ENCODE measurements at regions of chr1 and their contacts with region 1.

Region 1: DNA sequence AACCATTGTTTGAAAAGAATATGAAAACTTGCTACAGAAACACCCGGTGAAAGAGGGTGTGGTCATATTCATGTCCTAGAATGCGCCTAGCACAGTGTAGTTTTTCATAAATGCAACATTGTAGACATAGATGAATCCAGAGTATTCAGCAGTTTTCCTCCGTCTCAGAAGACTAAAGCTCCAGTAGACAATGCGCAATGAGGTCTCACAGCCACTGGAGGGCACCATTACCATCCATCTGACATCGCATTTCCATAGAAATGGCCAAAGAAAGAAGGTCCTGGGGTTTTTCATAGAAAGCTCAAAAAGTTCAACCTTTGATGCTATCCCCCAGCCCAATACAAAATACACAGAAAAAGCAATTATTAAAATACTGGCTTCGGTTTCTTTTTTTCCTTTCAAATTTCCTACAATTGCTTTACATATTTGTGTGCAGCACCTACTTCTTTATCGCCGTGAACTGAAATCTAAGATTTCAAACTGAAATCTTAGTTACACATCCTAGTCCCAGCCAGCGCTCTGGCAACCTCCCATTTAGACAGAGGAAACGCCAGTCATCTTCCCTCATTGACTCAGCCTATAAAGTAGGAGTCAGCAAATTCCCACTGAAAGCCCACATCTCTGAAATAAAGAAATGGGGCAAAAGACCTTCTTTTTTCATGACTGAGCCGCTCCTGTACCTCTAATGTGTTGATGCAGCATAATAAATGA is 3.9 kb upstream of the CD58 start:
- DNase-seq: peak; percentile 81
- H3K4me3 ChIP-seq: peak overlapping the region in 1 of 2 experiments; percentile 39; a peak in 1 of 4 replicates
- H3K27ac ChIP-seq: peak overlapping the region in 1 of 2 experiments; percentile 43; a peak in 1 of 4 replicates
- H3K4me1 ChIP-seq: peaks cover 3 to 23% of the 10 kb centered on the region in 2 experiments; a peak in 2 of 4 replicates
- H3K27me3 ChIP-seq: no peaks in the 10 kb centered on the region
- CTCF ChIP-seq: peak; percentile 93
- EP300 ChIP-seq: no peak
- RAD21 ChIP-seq: peak; percentile 96

Region 2: GRCh38 chr1:116472431-116472961 is 102.2 kb before region 1 on chr1:
- CTCF ChIA-PET with region 1: no interaction called
- POLR2A ChIA-PET with region 1: no interaction called
- DNase-seq: peak; percentile 57
- H3K4me3 ChIP-seq: no peak overlapping the region
- H3K27ac ChIP-seq: peak overlapping the region in 1 of 2 experiments; percentile 90; a peak in 2 of 4 replicates
- H3K4me1 ChIP-seq: peaks cover 6 to 27% of the 10 kb centered on the region in 2 experiments; a peak in 3 of 4 replicates
- H3K27me3 ChIP-seq: no peaks in the 10 kb centered on the region
- CTCF ChIP-seq: no peak
- EP300 ChIP-seq: peak in 1 of 2 experiments; percentile 29; a peak in 1 of 4 replicates
- RAD21 ChIP-seq: no peak

Region 3: GRCh38 chr1:116544588-116545358 is 30.0 kb before region 1 on chr1:
- CTCF ChIA-PET with region 1: no interaction called
- POLR2A ChIA-PET with region 1: no interaction called
- DNase-seq: no peak
- H3K4me3 ChIP-seq: no peak overlapping the region
- H3K27ac ChIP-seq: no peak overlapping the region
- H3K4me1 ChIP-seq: no peaks in the 10 kb centered on the region
- H3K27me3 ChIP-seq: no peaks in the 10 kb centered on the region
- CTCF ChIP-seq: no peak
- EP300 ChIP-seq: no peak
- RAD21 ChIP-seq: no peak

Region 4: GRCh38 chr1:116586741-116587143 is 12.0 kb after region 1 on chr1:
- CTCF ChIA-PET with region 1: interaction called, 18 read pairs
- POLR2A ChIA-PET with region 1: no interaction called
- DNase-seq: peak; percentile 57
- H3K4me3 ChIP-seq: no peak overlapping the region
- H3K27ac ChIP-seq: peak overlapping the region in 1 of 2 experiments; percentile 67; a peak in 2 of 4 replicates
- H3K4me1 ChIP-seq: peaks cover 0 to 16% of the 10 kb centered on the region in 2 experiments; a peak in 2 of 4 replicates
- H3K27me3 ChIP-seq: no peaks in the 10 kb centered on the region
- CTCF ChIP-seq: no peak
- EP300 ChIP-seq: no peak; a peak in 1 of 4 replicates
- RAD21 ChIP-seq: no peak; the same call in 1 of the 2 replicates

Region 5: DNA sequence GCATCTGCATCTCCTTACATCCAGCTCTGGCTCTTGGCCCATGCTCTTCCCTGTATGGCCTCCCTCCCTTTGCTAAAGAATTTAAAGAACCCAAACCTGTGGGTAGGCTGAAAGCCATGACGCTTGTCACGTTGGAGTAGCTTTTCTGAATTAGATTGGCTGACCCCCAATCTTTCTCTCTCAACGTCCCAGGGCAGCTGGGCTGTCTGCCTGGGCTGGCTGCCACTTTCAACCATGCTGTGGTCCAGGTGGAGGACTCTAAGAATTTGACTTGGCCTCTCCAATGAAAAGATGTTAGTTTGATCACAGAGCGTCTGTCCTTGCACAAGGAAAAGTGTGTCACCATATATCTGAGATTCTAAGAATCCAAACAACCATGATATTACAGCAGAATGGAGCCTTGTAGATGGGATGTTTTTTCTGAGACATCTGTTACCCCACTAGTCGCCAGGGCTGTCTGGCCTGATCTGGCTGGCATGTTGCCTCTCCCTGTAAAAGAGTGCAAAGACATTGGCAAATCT is 99.3 kb after region 1 on chr1:
- CTCF ChIA-PET with region 1: interaction called, 12 read pairs
- POLR2A ChIA-PET with region 1: no interaction called
- DNase-seq: no peak
- H3K4me3 ChIP-seq: no peak overlapping the region
- H3K27ac ChIP-seq: peak overlapping the region in 1 of 2 experiments; percentile 26; a peak in 1 of 4 replicates
- H3K4me1 ChIP-seq: peaks cover 0 to 7% of the 10 kb centered on the region in 2 experiments; a peak in 1 of 4 replicates
- H3K27me3 ChIP-seq: no peaks in the 10 kb centered on the region
- CTCF ChIP-seq: no peak
- EP300 ChIP-seq: no peak
- RAD21 ChIP-seq: no peak

Region 6: DNA sequence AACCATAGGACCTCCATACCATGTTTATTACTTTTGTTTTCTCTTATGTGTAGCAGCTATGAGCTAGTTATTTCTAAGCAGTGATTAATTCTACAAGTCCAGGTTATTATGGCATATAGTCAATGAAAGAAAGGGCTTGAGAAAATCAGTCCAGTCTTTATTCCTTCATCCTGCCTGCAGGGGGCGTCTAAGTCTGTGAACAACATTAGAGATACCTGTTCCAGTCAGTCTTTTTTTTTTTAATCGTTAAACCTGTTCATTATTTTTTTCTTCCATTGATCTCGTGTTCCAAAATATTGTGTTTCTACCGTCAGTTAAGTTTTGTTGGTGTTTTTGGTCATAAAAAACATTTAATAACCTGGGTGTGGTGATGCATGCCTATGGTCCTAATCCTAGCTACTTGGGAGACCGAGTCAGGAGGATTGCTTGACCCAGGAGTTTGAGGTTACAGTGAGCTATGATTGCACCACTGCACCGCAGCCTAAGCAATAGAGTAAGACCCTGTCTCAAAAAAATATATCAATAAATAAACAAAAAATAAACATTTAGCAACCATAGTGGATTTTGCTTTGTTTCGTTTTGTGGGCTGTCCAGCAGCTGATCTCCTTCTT is 150.1 kb after region 1 on chr1:
- CTCF ChIA-PET with region 1: interaction called, 10 read pairs
- POLR2A ChIA-PET with region 1: no interaction called
- DNase-seq: peak; percentile 42
- H3K4me3 ChIP-seq: no peak overlapping the region; a peak in 1 of 4 replicates
- H3K27ac ChIP-seq: no peak overlapping the region
- H3K4me1 ChIP-seq: peaks cover 0 to 6% of the 10 kb centered on the region in 2 experiments; a peak in 2 of 4 replicates
- H3K27me3 ChIP-seq: no peaks in the 10 kb centered on the region; the same call in 1 of the 2 replicates
- CTCF ChIP-seq: peak; percentile 90
- EP300 ChIP-seq: no peak
- RAD21 ChIP-seq: peak; percentile 64

Region 7: DNA sequence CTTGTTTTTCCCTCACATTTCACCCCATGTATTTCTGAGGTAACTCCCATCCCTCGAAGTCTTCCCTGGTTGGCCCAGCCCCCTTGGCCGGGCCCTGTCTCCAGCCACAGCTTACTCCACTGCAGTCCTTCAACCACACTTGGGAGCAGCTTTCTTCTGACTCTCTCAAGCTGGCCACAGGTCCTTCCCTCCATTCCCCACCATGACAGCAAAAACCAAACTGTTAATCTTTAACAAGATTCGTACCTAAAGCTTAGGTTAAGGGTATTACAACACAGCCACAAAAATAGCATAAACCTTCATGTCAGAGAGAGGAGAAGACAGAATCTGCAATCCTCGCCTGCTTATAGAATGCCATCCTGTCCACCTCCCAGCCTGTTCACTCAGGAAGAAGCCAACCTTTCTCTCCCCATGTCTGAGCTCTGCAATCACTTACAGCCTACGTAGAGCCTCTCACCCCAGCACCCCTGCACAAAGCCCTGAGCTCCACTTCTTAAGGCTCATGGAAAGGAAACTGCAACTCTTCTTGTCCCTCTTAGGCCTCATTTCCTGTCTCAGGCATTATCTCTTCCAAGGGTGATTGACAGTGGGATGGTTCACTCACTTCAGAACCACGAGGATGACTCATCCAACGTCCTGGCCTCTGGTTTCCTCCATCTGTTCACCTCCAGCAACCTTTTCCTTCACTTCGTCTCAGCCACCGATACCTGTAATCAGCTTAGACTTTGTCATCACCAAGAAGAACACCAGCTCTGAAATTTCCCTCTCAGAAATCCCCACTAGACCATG is 252.3 kb after region 1 on chr1:
- CTCF ChIA-PET with region 1: interaction called, 11 read pairs
- POLR2A ChIA-PET with region 1: no interaction called
- DNase-seq: no peak
- H3K4me3 ChIP-seq: no peak overlapping the region
- H3K27ac ChIP-seq: no peak overlapping the region
- H3K4me1 ChIP-seq: peaks cover 0 to 20% of the 10 kb centered on the region in 2 experiments; a peak in 2 of 4 replicates
- H3K27me3 ChIP-seq: no peaks in the 10 kb centered on the region
- CTCF ChIP-seq: no peak
- EP300 ChIP-seq: no peak
- RAD21 ChIP-seq: no peak

Region 8: GRCh38 chr1:117051224-117052064 is 476.7 kb after region 1 on chr1:
- CTCF ChIA-PET with region 1: interaction called, 28 read pairs
- POLR2A ChIA-PET with region 1: no interaction called
- DNase-seq: no peak
- H3K4me3 ChIP-seq: no peak overlapping the region
- H3K27ac ChIP-seq: no peak overlapping the region
- H3K4me1 ChIP-seq: no peaks in the 10 kb centered on the region
- H3K27me3 ChIP-seq: no peaks in the 10 kb centered on the region
- CTCF ChIP-seq: no peak
- EP300 ChIP-seq: no peak
- RAD21 ChIP-seq: no peak

Measured in SK-N-SH (cell line).